ENCODE measurements at regions of chr12 and their contacts with region 1.

Region 1: GRCh38 chr12:76031537-76032073 is at the start of gene PHLDA1:
- DNase-seq: peak; percentile 93 to 97 (median 96)
- ATAC-seq: peak; percentile 83 to 91 (median 88)
- H3K4me3 ChIP-seq: peak within 1 kb of the TSS; percentile 68 to 83 (median 72)
- H3K27ac ChIP-seq: peak within 1 kb of the TSS; percentile 88 to 98 (median 96)
- H3K4me1 ChIP-seq: peaks cover 0 to 17% (median 6%) of the 10 kb centered on the region in 3 donors
- H3K27me3 ChIP-seq: no peaks in the 10 kb centered on the region
- CTCF ChIP-seq: peak; percentile 25 to 54 (median 30)
- total RNA-seq, gene PHLDA1: 2.9 to 16.1 (median 7.1) TPM

Region 2: GRCh38 chr12:75533239-75533638 is 498.4 kb before region 1 on chr12:
- intact Hi-C with region 1: loop called in 2 of 3 experiments (anchors 10 kb)
- DNase-seq: no peak
- ATAC-seq: no peak
- H3K4me3 ChIP-seq: no peak overlapping the region
- H3K27ac ChIP-seq: no peak overlapping the region
- H3K4me1 ChIP-seq: no peaks in the 10 kb centered on the region
- H3K27me3 ChIP-seq: no peaks in the 10 kb centered on the region
- CTCF ChIP-seq: no peak